Calu3 (cell line): ENCODE measurements at regions of chr4 and their contacts with region 1.

Region 1: DNA sequence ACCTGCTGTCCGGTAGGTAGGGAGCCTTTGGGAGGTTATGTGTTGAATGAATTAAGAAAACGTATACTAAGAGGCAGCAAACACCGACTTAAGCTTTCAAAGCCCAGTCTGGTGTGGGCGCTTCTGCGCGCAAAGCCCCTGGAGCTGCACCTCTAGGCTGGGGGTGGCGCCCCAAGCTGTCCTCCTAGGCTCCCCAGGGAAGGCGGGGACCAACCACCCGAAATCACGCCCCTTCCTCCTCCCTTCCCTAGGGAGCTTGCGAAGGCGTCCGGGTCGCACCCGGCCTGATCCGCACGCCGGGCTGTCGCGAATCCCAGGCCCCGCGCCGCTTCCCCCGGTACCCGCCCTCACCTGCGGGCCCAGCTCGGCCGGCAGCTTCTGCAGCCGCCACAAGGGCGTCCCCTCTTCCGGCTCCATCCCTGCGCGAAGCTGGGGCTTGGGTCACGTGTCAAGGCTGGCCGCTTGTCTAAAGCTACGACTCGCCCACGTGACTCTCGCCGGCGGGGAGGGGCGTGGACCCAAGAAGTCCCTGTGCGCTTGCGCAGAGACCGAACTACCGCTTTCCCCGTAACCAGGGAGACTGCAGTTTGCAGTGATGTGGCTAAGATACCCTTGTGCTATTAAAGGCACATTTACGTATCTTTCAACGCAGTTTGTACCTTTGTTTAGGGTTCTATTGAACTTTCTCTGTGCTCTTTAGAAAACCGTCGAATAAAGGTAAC is at the start of gene COMMD8:
- DNase-seq: peak; percentile 92
- H3K4me3 Mint-ChIP-seq: peak within 1 kb of the TSS; percentile 84
- H3K27ac Mint-ChIP-seq: peak within 1 kb of the TSS; percentile 33
- H3K4me1 Mint-ChIP-seq: peaks cover 19% of the 10 kb centered on the region
- H3K27me3 Mint-ChIP-seq: no peaks in the 10 kb centered on the region
- CTCF ChIP-seq: no peak
- total RNA-seq, gene COMMD8: 13.5 and 13.7 TPM in 2 replicates

Region 2: DNA sequence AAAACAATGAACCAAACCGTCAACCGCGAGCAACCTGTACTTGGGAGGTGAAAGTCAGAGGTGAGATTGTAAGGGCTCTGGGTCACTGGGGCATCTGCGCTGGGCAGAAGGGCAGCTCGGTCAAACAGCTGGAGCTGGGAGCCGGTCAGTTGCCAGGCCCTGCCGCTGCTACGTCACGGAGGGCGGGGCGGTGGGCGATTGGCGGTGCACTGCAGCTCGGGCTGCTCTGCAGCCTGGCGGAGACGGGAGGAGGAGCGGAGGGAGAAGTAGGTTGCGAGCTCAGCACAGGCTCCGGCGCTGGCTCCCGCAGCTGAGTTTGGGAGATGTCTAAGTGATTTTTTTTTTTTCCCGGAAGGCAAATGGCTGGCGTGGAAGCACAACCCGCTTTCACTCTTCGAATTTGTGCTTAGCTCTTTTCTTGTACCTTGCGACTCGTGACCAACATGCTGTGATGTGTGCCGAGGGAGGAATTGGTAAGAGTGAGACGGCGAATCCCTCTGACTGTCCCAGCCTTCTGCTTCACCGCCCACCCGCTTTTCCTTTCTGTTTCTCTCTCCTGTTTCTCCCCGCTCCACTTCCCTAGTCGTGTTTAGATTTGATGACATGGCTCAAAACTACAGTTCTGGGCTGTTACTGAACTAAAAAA is 21.8 kb after region 1 on chr4 and contains the start of gene ATP10D:
- CTCF ChIA-PET with region 1: interaction called, 12 read pairs
- intact Hi-C with region 1: no loop called
- DNase-seq: peak; percentile 92
- H3K4me3 Mint-ChIP-seq: peak within 1 kb of the TSS; percentile 94
- H3K27ac Mint-ChIP-seq: peak within 1 kb of the TSS; percentile 94
- H3K4me1 Mint-ChIP-seq: no peaks in the 10 kb centered on the region
- H3K27me3 Mint-ChIP-seq: no peaks in the 10 kb centered on the region
- CTCF ChIP-seq: no peak
- total RNA-seq, gene ATP10D: 11.0 and 13.8 TPM in 2 replicates